Gastrocnemius medialis (tissue), 4 donors: ENCODE measurements at regions of chr1 and their contacts with region 1.

Region 1: DNA sequence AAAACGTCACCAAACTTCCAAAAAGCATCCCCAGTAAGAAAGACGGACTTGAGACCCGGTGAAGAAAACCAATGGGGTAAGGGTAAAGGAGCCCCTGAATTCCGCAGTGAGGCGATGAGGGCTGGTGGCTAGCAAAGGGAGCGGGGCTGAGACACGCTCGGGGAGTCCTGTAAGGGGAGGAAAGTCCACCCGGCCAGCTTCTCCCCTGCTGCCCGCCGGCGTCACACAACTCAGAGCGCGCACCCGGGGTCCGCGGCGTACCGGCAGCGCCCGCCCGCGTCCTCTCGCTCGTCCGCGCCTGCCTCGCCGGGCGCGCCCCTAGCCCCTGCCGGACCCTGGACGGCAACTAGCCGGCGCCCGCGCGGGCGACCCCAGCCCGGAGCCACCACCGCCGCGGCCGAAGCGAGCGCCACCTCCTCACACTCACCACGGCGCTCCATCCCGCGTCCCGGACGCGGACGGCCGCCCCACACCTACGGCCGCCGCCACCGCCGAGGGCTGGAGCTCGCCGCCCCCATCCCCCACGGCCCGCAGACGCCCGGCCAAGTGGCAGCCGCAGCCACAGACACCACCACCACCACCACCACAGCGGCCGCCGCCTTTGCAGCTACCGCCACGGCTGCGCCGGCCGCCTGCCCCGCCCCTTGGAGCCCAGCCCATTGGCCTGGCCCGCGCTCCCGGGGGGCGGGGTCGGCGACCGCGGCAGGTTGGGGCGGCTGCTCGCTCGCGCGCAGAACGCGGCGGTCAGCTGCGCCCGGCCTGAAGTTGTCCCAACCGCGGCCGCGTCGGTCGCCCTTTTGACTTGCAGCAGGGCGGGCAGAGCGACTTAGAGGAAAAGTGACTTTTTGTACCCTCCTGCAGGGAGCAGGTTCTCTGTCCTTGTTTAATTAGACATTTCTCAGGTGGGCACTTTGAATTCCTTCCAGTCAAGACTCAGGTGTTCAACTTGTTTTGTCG is 10.0 kb upstream of the ARHGAP29 start:
- DNase-seq: peak; percentile 44 to 60
- ATAC-seq: peak; percentile 87 to 92
- H3K4me3 ChIP-seq: peak overlapping the region; percentile 60 to 71 (median 65)
- H3K27ac ChIP-seq: peak overlapping the region; percentile 65 to 81 (median 78)
- H3K4me1 ChIP-seq: peaks cover 3 to 6% of the 10 kb centered on the region in 2 donors
- H3K27me3 ChIP-seq: no peaks in the 10 kb centered on the region
- CTCF ChIP-seq: no peak
- POLR2A ChIP-seq: peak; percentile 79 to 85

Region 2: GRCh38 chr1:94299627-94300552 is 52.5 kb after region 1 on chr1:
- in situ Hi-C with region 1: no loop called
- intact Hi-C with region 1: loop called (anchors 5 kb)
- DNase-seq: no peak
- ATAC-seq: no peak
- H3K4me3 ChIP-seq: no peak overlapping the region
- H3K27ac ChIP-seq: peak overlapping the region; percentile 42 to 72 (median 60)
- H3K4me1 ChIP-seq: peaks cover 13 to 30% of the 10 kb centered on the region in 2 donors
- H3K27me3 ChIP-seq: no peaks in the 10 kb centered on the region
- CTCF ChIP-seq: no peak
- POLR2A ChIP-seq: no peak

Region 3: GRCh38 chr1:94351485-94351884 is 104.1 kb after region 1 on chr1:
- in situ Hi-C with region 1: no loop called
- intact Hi-C with region 1: no loop called
- DNase-seq: no peak
- ATAC-seq: no peak
- H3K4me3 ChIP-seq: no peak overlapping the region
- H3K27ac ChIP-seq: no peak overlapping the region
- H3K4me1 ChIP-seq: no peaks in the 10 kb centered on the region
- H3K27me3 ChIP-seq: no peaks in the 10 kb centered on the region
- CTCF ChIP-seq: no peak
- POLR2A ChIP-seq: no peak

Region 4: DNA sequence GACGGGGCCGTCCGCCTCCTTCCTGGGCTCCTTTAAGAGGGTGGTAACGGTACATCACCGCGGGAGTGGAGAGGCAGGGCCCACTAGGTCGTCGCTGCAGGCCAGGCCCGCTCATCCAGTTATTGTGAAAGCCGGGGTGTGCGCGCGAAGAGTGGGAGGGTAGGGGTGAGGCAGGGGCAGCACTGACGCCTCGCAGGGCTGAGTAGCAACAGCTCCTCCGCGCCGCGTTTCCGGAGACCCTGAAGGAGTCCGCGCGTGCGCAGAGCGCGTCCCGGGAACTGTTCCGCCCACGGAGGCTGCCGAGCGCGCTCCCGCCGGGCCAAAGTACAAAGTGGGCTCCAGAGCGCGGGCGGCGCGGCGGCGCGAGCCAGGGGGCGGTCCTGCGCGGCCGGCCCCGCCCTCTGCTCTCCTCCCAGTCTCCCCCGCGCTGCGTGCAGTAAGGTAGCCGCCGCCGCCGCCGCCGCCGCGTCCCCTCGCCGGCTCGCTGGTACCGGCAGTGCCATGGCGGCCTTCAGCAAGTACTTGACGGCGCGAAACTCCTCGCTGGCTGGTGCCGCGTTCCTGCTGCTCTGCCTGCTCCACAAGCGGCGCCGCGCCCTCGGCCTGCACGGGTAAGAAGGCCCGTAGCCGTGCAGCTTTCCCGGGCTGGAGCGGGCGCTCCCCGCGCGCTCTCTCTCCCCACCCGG is 170.7 kb after region 1 on chr1 and contains the start of gene ABCD3:
- in situ Hi-C with region 1: no loop called
- intact Hi-C with region 1: loop called (anchors 5 kb)
- DNase-seq: peak; percentile 93 to 97
- ATAC-seq: peak; percentile 89 to 91
- H3K4me3 ChIP-seq: peak within 1 kb of the TSS; percentile 91 to 98 (median 94)
- H3K27ac ChIP-seq: peak within 1 kb of the TSS; percentile 86 to 93 (median 88)
- H3K4me1 ChIP-seq: peaks cover 33 to 37% of the 10 kb centered on the region in 2 donors
- H3K27me3 ChIP-seq: no peaks in the 10 kb centered on the region
- CTCF ChIP-seq: no peak
- POLR2A ChIP-seq: peak; percentile 83 to 91
- total RNA-seq, gene ABCD3: 33.4 to 42.8 (median 36.6) TPM

Region 5: DNA sequence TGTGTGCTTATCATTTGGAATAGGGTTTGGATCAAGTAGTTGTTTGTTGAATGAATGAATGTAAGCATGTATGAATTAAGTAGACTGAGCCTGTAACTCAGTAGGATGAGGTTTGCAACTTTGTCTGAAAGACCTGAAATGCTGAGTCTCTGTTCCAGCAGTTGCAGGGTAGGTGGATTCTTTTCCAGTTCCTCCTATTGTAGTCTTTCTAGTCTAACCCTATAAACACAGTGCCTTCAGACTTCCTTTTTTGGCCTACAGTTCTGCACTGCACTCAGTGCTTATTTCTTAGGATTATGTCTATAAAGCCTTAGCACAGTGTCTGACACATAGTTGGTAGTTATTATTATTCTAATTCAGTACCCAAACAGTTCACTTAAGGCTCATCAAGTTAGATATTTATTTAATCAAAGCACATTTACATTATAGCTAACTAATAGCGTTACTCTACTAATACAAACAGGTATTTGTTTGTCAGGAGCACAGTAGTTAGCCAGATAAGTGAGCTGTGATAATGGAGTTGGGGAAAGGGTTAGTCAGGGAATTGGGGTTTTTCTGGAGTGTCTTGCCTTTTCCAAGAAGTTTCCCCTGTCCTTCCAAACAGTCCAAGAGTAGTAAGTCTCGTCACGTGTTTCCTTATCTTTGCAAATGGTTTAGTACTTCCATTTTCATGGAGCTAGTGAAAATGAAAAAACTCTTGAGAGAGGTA is 215.8 kb after region 1 on chr1:
- in situ Hi-C with region 1: no loop called
- intact Hi-C with region 1: no loop called
- DNase-seq: no peak
- ATAC-seq: no peak
- H3K4me3 ChIP-seq: no peak overlapping the region
- H3K27ac ChIP-seq: no peak overlapping the region
- H3K4me1 ChIP-seq: peaks cover 0 to 6% of the 10 kb centered on the region in 2 donors
- H3K27me3 ChIP-seq: no peaks in the 10 kb centered on the region
- CTCF ChIP-seq: no peak
- POLR2A ChIP-seq: no peak

Region 6: DNA sequence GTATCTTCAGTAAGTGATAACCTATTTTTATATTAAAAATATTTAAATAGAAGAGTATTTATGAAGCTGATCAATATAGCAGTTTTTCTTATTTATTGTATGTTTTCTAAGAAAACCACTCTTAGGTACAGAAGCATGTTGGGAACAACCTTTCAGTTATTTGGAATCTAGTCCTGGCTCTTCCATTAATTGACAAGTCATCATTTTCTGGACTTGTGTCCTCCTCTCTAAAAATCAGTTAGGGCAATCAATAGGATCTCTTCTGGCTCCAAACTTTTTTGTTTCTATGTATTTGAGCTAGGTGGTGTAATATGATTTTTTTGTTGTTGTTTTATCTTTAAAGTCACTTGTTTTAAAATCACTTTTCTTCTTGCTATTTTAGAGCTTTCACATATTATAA is 227.8 kb after region 1 on chr1:
- in situ Hi-C with region 1: no loop called
- intact Hi-C with region 1: no loop called
- DNase-seq: no peak
- ATAC-seq: no peak
- H3K4me3 ChIP-seq: no peak overlapping the region
- H3K27ac ChIP-seq: no peak overlapping the region
- H3K4me1 ChIP-seq: no peaks in the 10 kb centered on the region
- H3K27me3 ChIP-seq: no peaks in the 10 kb centered on the region
- CTCF ChIP-seq: no peak
- POLR2A ChIP-seq: no peak

Region 7: GRCh38 chr1:94909486-94909885 is 662.1 kb after region 1 on chr1:
- in situ Hi-C with region 1: no loop called
- intact Hi-C with region 1: no loop called
- DNase-seq: no peak
- ATAC-seq: no peak
- H3K4me3 ChIP-seq: no peak overlapping the region
- H3K27ac ChIP-seq: no peak overlapping the region
- H3K4me1 ChIP-seq: no peaks in the 10 kb centered on the region
- H3K27me3 ChIP-seq: no peaks in the 10 kb centered on the region
- CTCF ChIP-seq: no peak
- POLR2A ChIP-seq: no peak